ENCODE measurements at regions of chr19 and their contacts with region 1.

Region 1: DNA sequence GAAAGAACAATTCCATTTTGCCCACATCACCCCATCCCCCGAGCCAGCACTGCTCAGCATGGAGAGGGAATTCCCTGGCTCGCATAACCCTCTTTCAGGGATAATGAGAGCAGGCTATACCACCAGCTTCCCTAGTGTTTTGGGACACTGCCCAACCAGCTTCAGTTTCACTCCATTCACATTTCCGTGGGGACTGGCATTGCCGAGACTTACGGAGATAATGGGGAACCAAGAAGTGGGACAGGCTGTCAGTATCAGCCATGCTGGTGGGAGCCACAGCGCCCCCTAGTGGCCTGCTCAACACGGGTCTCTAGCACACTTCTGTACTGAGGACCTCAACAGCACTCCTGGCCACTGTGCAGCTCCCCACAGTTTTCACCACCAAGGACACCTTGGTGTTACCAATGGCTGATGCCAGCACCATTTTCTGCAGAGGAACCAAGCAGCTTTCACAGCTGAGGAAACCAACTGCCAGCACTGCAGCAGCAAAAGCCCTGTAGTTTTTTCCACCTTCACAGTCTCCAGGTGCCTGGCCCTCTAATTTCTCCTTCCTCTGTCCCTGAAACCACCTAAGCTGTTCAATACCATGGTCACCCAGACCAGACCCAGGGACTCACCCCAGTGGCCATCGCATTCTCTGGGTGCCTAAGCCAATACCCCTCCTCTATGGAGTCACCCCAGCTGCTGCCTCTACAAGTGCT is 23.7 kb downstream of the SLC6A16 start:
- DNase-seq: peak; percentile 83
- H3K4me3 ChIP-seq: peak overlapping the region; percentile 29
- H3K27ac ChIP-seq: no peak overlapping the region
- H3K4me1 ChIP-seq: no peaks in the 10 kb centered on the region
- H3K27me3 ChIP-seq: no peaks in the 10 kb centered on the region
- CTCF ChIP-seq: peak; percentile 98

Region 2: GRCh38 chr19:48954595-48955310 is 346.6 kb before region 1 on chr19 and contains the start of gene BAX:
- CTCF ChIA-PET with region 1: no interaction called
- POLR2A ChIA-PET with region 1: no interaction called
- intact Hi-C with region 1: no loop called
- DNase-seq: peak; percentile 98
- H3K4me3 ChIP-seq: peak within 1 kb of the TSS; percentile 81
- H3K27ac ChIP-seq: peak within 1 kb of the TSS; percentile 83
- H3K4me1 ChIP-seq: peaks cover 10% of the 10 kb centered on the region
- H3K27me3 ChIP-seq: no peaks in the 10 kb centered on the region
- CTCF ChIP-seq: no peak
- total RNA-seq, gene BAX: 103 and 112 TPM in 2 replicates

Region 3: DNA sequence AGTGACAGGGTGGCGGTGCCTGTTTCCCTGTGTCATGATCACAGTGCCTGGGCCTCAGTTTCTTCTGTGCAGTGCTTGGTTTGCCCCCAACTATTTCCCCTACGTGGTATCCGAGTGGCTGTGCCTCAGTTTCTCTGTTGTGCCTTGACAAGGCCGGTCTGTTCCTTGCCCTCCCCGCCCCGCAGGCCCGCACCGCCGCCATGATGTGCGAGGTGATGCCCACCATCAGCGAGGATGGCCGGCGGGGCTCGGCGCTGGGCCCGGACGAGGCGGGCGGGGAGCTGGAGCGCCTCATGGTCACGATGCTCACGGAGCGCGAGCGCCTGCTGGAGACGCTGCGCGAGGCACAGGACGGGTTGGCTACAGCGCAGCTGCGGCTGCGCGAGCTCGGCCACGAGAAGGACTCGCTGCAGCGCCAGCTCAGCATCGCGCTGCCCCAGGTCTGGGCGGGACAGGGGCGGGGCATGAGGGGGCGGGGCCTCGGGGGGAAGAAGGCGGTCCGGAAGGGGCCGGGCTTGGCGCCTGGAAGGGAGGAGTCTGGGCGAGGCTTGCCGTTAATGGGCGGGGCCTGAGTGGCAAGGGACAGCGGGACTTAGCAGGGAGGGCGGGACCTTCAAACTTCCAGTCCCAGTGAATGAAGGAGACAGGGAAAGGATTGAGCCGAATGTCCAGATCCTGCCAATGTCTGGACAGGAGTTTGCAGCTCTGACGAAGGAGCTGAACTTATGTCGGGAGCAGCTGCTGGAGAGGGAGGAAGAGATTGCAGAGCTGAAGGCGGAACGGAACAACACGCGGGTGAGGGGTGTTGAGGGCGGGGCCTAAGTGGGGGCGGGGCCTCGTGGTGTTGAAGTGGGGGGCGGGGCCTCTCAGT is 173.4 kb before region 1 on chr19:
- CTCF ChIA-PET with region 1: interaction called, 25 read pairs
- POLR2A ChIA-PET with region 1: no interaction called
- intact Hi-C with region 1: no loop called
- DNase-seq: peak; percentile 98
- H3K4me3 ChIP-seq: peak overlapping the region; percentile 49
- H3K27ac ChIP-seq: no peak overlapping the region
- H3K4me1 ChIP-seq: peaks cover 18% of the 10 kb centered on the region
- H3K27me3 ChIP-seq: no peaks in the 10 kb centered on the region
- CTCF ChIP-seq: no peak

Region 4: DNA sequence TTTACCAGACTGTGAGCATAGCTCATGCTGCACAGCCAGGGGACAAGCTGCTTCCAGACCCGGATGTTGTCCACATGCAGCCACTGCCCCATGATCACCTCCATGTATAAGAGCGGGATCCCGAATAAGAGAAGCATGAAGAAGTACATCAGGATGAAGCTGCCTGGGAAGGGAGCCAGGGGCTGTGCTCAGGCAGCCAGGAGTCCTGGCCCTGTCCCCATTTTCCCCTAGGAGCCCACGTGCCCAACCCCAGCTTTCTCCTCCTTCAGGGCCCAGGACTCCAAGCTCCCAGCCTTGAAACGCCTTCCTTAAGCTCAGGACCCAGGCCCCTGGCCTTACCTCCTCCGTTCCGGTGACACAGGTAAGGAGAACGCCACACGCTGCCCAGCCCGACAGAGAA is 45.6 kb before region 1 on chr19:
- CTCF ChIA-PET with region 1: no interaction called
- POLR2A ChIA-PET with region 1: no interaction called
- intact Hi-C with region 1: no loop called
- DNase-seq: no peak
- H3K4me3 ChIP-seq: no peak overlapping the region
- H3K27ac ChIP-seq: no peak overlapping the region
- H3K4me1 ChIP-seq: no peaks in the 10 kb centered on the region
- H3K27me3 ChIP-seq: no peaks in the 10 kb centered on the region
- CTCF ChIP-seq: no peak

Measured in A673 (cell line).